ENCODE measurements at regions of chr11 and their contacts with region 1.

Region 1: GRCh38 chr11:17544181-17544622 is at the start of gene USH1C:
- DNase-seq: peak; percentile 79
- ATAC-seq: peak; percentile 57
- H3K4me3 Mint-ChIP-seq: peak within 1 kb of the TSS; percentile 72
- H3K27ac Mint-ChIP-seq: 0 out of 2 replicates have a peak within 1 kb of the TSS, but pooled peaks have one; percentile 30
- H3K4me1 Mint-ChIP-seq: peaks cover 49% of the 10 kb centered on the region
- H3K27me3 Mint-ChIP-seq: peaks cover 36% of the 10 kb centered on the region
- CTCF ChIP-seq: no peak
- total RNA-seq, gene USH1C: 3.3 to 3.9 TPM (median 3.7 TPM) in 3 replicates

Region 2: GRCh38 chr11:17473071-17473744 is 71.0 kb before region 1 on chr11:
- CTCF ChIA-PET with region 1: interaction called, 3 read pairs
- POLR2A ChIA-PET with region 1: interaction called, 13 read pairs
- DNase-seq: peak; percentile 76
- ATAC-seq: peak; percentile 91
- H3K4me3 Mint-ChIP-seq: peak overlapping the region; percentile 11; the same call in 1 of the 2 replicates
- H3K27ac Mint-ChIP-seq: no peak overlapping the region
- H3K4me1 Mint-ChIP-seq: peaks cover 14% of the 10 kb centered on the region
- H3K27me3 Mint-ChIP-seq: peaks cover 47% of the 10 kb centered on the region
- CTCF ChIP-seq: peak; percentile 25; the same call in 1 of the 2 replicates

Region 3: DNA sequence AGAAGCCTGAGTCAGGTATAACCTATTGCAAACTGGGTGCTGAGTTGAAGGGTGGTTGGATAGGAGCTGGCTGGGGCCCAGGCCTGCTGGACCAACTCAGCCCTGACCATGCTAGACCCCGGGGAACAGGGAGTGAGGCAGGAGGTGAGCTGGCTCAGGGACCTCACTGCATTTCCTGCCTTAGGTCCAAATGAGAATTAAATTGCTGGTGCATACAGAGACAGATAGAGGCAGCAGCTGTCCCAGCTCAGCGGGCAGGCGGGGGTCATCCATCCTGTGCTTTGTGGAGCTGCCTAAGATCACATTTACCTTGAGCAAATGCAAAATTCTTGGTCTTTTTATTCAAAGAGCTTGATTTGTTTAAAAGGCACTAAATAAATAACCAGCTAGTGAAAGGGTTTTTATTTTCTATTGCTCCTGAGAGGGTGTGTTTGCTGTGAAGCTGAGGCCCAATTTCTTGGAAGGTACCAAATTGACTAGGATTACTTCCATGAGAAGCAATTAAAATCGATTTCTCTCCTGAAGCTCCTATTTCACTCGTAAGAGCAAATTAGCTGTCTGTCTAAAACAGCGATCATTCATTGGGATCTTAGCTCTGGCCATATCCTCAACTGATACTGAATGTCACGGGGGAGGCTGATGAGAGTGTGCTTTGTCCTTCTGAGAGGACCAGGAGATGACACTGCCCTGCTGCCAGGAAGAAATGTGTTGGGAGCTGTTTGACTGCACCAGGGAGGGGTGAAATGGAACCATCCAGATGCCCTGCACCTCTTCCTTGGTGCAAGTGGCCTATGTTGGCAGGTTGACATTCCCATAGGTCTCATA is 24.9 kb before region 1 on chr11:
- CTCF ChIA-PET with region 1: interaction called, 18 read pairs
- POLR2A ChIA-PET with region 1: no interaction called
- DNase-seq: no peak
- ATAC-seq: peak; percentile 89
- H3K4me3 Mint-ChIP-seq: no peak overlapping the region
- H3K27ac Mint-ChIP-seq: peak overlapping the region; percentile 30; the same call in 1 of the 2 replicates
- H3K4me1 Mint-ChIP-seq: peaks cover 30% of the 10 kb centered on the region
- H3K27me3 Mint-ChIP-seq: no peaks in the 10 kb centered on the region; the same call in 1 of the 2 replicates
- CTCF ChIP-seq: no peak

Region 4: GRCh38 chr11:17563248-17563647 is 19.0 kb after region 1 on chr11:
- CTCF ChIA-PET with region 1: interaction called, 18 read pairs
- POLR2A ChIA-PET with region 1: no interaction called
- DNase-seq: peak; percentile 25
- ATAC-seq: peak; percentile 92
- H3K4me3 Mint-ChIP-seq: no peak overlapping the region
- H3K27ac Mint-ChIP-seq: no peak overlapping the region
- H3K4me1 Mint-ChIP-seq: no peaks in the 10 kb centered on the region
- H3K27me3 Mint-ChIP-seq: no peaks in the 10 kb centered on the region
- CTCF ChIP-seq: no peak

Region 5: GRCh38 chr11:17722000-17722643 is 177.9 kb after region 1 on chr11:
- CTCF ChIA-PET with region 1: interaction called, 14 read pairs
- POLR2A ChIA-PET with region 1: no interaction called
- DNase-seq: peak; percentile 75
- ATAC-seq: peak; percentile 12
- H3K4me3 Mint-ChIP-seq: peak overlapping the region; percentile 58
- H3K27ac Mint-ChIP-seq: no peak overlapping the region
- H3K4me1 Mint-ChIP-seq: peaks cover 11% of the 10 kb centered on the region
- H3K27me3 Mint-ChIP-seq: peaks cover 18% of the 10 kb centered on the region
- CTCF ChIP-seq: no peak

Measured in WTC11 (cell line).